RWPE1 (cell line): ENCODE measurements at regions of chrX and their contacts with region 1.

Region 1: DNA sequence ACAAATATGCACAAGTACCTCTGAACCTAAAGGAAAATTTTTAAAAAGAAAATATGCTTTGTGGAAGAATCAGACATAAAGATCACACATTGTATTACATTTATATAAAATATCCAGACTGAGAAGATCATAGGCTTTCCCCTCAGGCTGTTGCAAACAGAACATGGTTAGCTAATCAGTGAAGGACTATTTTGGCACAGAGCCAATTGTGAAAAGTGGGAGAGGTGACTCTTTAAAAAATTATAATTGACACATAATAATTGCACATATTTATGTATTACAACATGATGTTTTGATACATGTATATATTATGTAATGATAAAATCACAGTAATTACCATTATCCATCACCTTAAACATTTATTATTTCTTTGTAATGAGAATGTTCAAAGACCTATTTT is 44.1 kb upstream of the FOXR2 start:
- DNase-seq: no peak
- H3K27ac ChIP-seq: no peak overlapping the region
- CTCF ChIP-seq: no peak

Region 2: DNA sequence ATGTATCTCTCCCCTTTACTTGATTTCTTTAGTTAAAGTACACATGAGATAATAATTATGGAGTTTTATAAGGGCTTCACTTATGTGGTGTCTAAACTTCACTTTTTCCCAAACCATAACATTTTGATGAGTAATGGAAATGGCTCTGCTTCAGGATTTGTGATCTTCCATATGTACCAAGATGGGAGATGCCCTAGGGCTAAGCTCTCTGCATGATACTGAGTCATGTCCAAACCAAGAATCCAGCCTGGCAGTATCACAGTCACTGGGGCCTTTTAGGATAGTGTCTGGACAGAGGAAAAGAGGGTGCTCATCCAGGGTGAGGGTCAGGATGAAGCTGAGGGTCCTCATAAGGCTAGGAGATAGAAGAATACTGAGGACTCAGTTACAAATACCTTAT is 266.5 kb before region 1 on chrX:
- CTCF ChIA-PET with region 1: no interaction called
- POLR2A ChIA-PET with region 1: no interaction called
- DNase-seq: no peak
- H3K27ac ChIP-seq: no peak overlapping the region
- CTCF ChIP-seq: no peak

Region 3: GRCh38 chrX:55754861-55755294 is 175.8 kb after region 1 on chrX:
- CTCF ChIA-PET with region 1: interaction called, 10 read pairs
- POLR2A ChIA-PET with region 1: no interaction called
- DNase-seq: no peak
- H3K27ac ChIP-seq: no peak overlapping the region
- CTCF ChIP-seq: no peak